ENCODE measurements at regions of chr11 and their contacts with region 1.

Region 1: GRCh38 chr11:86938900-86939880 is 16.0 kb downstream of the FZD4 start:
- DNase-seq: no peak

Region 2: DNA sequence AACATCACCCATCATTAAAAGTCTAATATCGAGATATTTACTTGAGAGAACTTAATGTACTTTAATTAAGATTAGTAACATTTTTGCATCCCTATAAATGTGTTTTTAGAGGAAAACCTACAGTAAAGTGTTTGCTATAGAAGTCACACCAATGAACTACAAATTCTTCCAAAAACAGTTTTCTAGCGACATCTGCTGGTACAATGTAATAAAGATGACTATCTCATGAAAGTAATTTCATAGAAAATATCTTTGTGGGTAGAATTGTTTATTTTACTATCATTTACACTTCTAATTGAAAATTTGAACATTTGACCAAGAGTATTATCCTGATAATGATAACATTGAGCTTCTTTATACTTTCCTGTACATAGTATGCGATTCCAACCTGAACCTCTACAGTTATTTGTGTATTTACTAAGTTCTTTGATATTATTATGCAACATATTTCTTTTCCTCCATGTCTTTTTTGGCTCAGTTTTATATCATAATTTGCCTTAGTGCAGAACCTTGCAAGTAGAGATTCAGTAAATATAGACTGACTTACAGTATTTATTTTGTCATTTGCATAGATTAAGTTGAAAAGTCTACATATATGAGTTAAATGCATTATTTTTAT is 351.2 kb after region 1 on chr11:
- intact Hi-C with region 1: loop called (anchors 2 kb)
- DNase-seq: no peak

Region 3: GRCh38 chr11:87421422-87421821 is 482.2 kb after region 1 on chr11:
- intact Hi-C with region 1: loop called (anchors 10 kb)
- DNase-seq: no peak

Measured in cardiac septum (tissue), 1 donor.